Heart left ventricle (tissue), 16 donors: ENCODE measurements at regions of chrX and their contacts with region 1.

Region 1: GRCh38 chrX:14029425-14030173 is at the start of gene GEMIN8:
- DNase-seq: peak; percentile 85 to 92 (median 90)
- ATAC-seq: peak; percentile 94 to 99 (median 98)
- H3K4me3 ChIP-seq: peak within 1 kb of the TSS; percentile 34 to 97 (median 70)
- H3K27ac ChIP-seq: peak within 1 kb of the TSS; percentile 40 to 89 (median 84)
- H3K4me1 ChIP-seq: peaks cover 0 to 30% (median 13%) of the 10 kb centered on the region in 12 donors
- H3K27me3 ChIP-seq: peaks cover 0 to 24% (median 0%) of the 10 kb centered on the region in 9 donors
- CTCF ChIP-seq: no peak
- POLR2A ChIP-seq: peak in 1 of 2 donors; percentile 53
- total RNA-seq, gene GEMIN8: 10.3 to 16.3 (median 13.5) TPM

Region 2: DNA sequence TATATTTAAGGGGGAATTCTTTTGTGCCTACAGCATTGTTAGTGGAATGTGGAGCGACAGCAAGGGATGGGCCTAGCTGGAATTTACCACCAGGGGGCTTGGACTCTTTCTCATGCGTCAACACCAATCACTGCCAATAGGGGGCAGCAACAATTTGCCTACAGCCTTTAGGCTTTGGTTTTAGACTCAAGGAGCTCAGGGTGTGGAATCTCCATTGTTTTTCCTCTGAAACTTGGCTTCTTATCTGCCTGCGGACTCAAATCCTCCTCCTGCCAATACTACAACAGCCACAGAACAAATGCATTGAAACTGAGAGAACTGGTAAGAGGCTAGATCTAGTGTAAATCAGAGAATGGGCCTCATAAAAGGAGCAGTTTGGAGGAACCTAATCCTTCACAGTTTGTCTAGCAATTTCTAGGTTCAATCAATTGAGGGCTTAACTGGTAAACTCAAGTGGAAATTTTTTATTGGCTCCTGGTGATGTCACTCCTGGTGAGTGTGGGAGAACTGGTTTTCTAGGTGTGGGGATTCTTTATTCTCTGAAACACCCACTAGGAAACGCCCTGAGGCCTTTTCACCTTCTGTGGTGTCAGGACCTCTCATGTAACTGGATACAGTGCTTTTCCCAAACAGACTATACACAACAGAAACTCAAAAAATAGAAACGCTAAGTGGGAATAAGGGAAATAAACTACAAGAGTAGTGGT is 1082.6 kb before region 1 on chrX:
- intact Hi-C with region 1: loop called in 1 of 10 experiments (anchors 10 kb)
- DNase-seq: peak in 4 of 5 donors; percentile 59 to 62 (median 60)
- ATAC-seq: peak in 3 of 4 donors; percentile 75 to 79 (median 78)
- H3K4me3 ChIP-seq: no peak overlapping the region
- H3K27ac ChIP-seq: peak overlapping the region in 8 of 12 donors; percentile 32 to 77 (median 64)
- H3K4me1 ChIP-seq: peaks cover 0 to 55% (median 14%) of the 10 kb centered on the region in 12 donors
- H3K27me3 ChIP-seq: peaks cover 0 to 9% (median 0%) of the 10 kb centered on the region in 9 donors
- CTCF ChIP-seq: peak; percentile 73 to 97 (median 83)
- POLR2A ChIP-seq: no peak

Region 3: GRCh38 chrX:13646154-13646549 is 383.4 kb before region 1 on chrX:
- intact Hi-C with region 1: loop called in 1 of 10 experiments (anchors 5 kb)
- DNase-seq: peak; percentile 43 to 69 (median 64)
- ATAC-seq: peak in 3 of 4 donors; percentile 68 to 81 (median 78)
- H3K4me3 ChIP-seq: no peak overlapping the region
- H3K27ac ChIP-seq: no peak overlapping the region
- H3K4me1 ChIP-seq: peaks cover 0 to 10% (median 0%) of the 10 kb centered on the region in 12 donors
- H3K27me3 ChIP-seq: peaks cover 0 to 32% (median 0%) of the 10 kb centered on the region in 9 donors
- CTCF ChIP-seq: peak; percentile 30 to 74 (median 62)
- POLR2A ChIP-seq: no peak

Region 4: DNA sequence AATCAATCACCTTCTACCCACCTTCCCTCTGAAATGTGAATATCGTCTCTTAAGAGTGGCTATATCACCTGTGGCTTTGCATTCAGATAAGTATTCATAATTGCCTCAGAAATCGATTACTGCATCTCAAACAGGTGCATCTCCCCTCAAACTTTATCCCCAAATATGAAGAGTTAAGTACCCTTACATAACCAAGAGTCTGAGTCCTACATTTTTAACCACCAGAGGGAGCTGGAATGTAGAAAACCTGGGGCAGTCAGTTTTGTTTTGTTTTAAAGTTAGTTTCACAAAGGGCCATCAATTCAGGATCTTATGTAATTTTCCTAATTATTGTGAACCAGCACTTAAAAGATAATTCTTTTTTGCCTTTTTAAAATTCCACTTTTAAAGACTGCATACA is 371.0 kb before region 1 on chrX:
- intact Hi-C with region 1: loop called in 9 of 10 experiments (anchors 2 to 10 kb)
- DNase-seq: no peak
- ATAC-seq: peak in 2 of 4 donors; percentile 48 to 49
- H3K4me3 ChIP-seq: peak overlapping the region in 2 of 12 donors; percentile 13 to 21
- H3K27ac ChIP-seq: peak overlapping the region in 5 of 12 donors; percentile 54 to 69 (median 63)
- H3K4me1 ChIP-seq: peaks cover 0 to 20% (median 6%) of the 10 kb centered on the region in 12 donors
- H3K27me3 ChIP-seq: peaks cover 0 to 7% (median 0%) of the 10 kb centered on the region in 9 donors
- CTCF ChIP-seq: peak; percentile 46 to 69 (median 62)
- POLR2A ChIP-seq: no peak

Region 5: GRCh38 chrX:13750204-13750603 is 279.4 kb before region 1 on chrX:
- intact Hi-C with region 1: loop called in 7 of 10 experiments (anchors 5 kb)
- DNase-seq: no peak
- ATAC-seq: peak in 1 of 4 donors; percentile 36
- H3K4me3 ChIP-seq: no peak overlapping the region
- H3K27ac ChIP-seq: no peak overlapping the region
- H3K4me1 ChIP-seq: no peaks in the 10 kb centered on the region
- H3K27me3 ChIP-seq: peaks cover 0 to 4% (median 0%) of the 10 kb centered on the region in 9 donors
- CTCF ChIP-seq: peak; percentile 36 to 59 (median 46)
- POLR2A ChIP-seq: no peak

Region 6: DNA sequence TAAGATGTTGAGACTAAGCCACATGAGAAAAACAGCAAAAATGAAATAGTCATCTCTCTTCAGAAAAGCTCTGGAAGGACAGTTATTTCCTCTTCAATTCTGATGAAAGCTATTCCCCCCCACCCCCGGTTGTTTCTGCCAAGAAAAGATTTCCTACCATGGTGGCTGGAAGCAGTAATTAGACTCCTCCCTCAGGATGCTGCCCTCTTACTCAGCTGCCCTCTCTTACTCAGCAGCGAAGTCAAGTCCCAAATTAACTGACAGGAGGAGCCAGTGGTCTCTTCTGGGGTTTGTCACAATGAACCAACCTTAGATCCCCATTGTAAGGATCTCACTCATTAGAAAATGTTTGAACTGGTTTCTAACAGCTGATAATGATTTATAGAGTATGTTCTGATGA is 250.7 kb before region 1 on chrX:
- intact Hi-C with region 1: loop called in 1 of 10 experiments (anchors 10 kb)
- DNase-seq: no peak
- ATAC-seq: peak in 2 of 4 donors; percentile 39 to 45
- H3K4me3 ChIP-seq: no peak overlapping the region
- H3K27ac ChIP-seq: no peak overlapping the region
- H3K4me1 ChIP-seq: no peaks in the 10 kb centered on the region
- H3K27me3 ChIP-seq: peaks cover 0 to 14% (median 0%) of the 10 kb centered on the region in 9 donors
- CTCF ChIP-seq: no peak
- POLR2A ChIP-seq: no peak

Region 7: GRCh38 chrX:15087747-15088146 is 1058.1 kb after region 1 on chrX:
- intact Hi-C with region 1: no loop called
- DNase-seq: no peak
- ATAC-seq: no peak
- H3K4me3 ChIP-seq: no peak overlapping the region
- H3K27ac ChIP-seq: no peak overlapping the region
- H3K4me1 ChIP-seq: no peaks in the 10 kb centered on the region
- H3K27me3 ChIP-seq: peaks cover 0 to 8% (median 0%) of the 10 kb centered on the region in 9 donors
- CTCF ChIP-seq: no peak
- POLR2A ChIP-seq: no peak